ENCODE measurements at regions of chr16 and their contacts with region 1.

Region 1: GRCh38 chr16:85777583-85778298 is 21.6 kb downstream of the EMC8 start:
- DNase-seq: no peak
- H3K4me3 ChIP-seq: no peak overlapping the region
- H3K27ac ChIP-seq: peak overlapping the region; percentile 56
- H3K4me1 ChIP-seq: peaks cover 16% of the 10 kb centered on the region
- H3K27me3 ChIP-seq: no peaks in the 10 kb centered on the region
- CTCF ChIP-seq: no peak
- POLR2A ChIP-seq: no peak

Region 2: GRCh38 chr16:85799497-85800337 is 22.0 kb after region 1 on chr16 and contains the starts of genes COX4I1 and EMC8:
- CTCF ChIA-PET with region 1: no interaction called
- POLR2A ChIA-PET with region 1: no interaction called
- dilution Hi-C with region 1: no loop called
- intact Hi-C with region 1: loop called (anchors 1 kb)
- DNase-seq: peak; percentile 92
- H3K4me3 ChIP-seq: peak within 1 kb of the TSS; percentile 52 to 99 (median 85)
- H3K27ac ChIP-seq: peak within 1 kb of the TSS; percentile 96
- H3K4me1 ChIP-seq: peaks cover 14% of the 10 kb centered on the region
- H3K27me3 ChIP-seq: no peaks in the 10 kb centered on the region
- CTCF ChIP-seq: no peak
- POLR2A ChIP-seq: peak; percentile 79
- total RNA-seq, gene COX4I1: 535 and 560 TPM in 2 replicates
- total RNA-seq, gene EMC8: 51.1 and 51.2 TPM in 2 replicates

Region 3: GRCh38 chr16:85869785-85870558 is 92.2 kb after region 1 on chr16:
- CTCF ChIA-PET with region 1: no interaction called
- POLR2A ChIA-PET with region 1: no interaction called
- dilution Hi-C with region 1: no loop called
- intact Hi-C with region 1: no loop called
- DNase-seq: no peak
- H3K4me3 ChIP-seq: no peak overlapping the region
- H3K27ac ChIP-seq: no peak overlapping the region
- H3K4me1 ChIP-seq: no peaks in the 10 kb centered on the region
- H3K27me3 ChIP-seq: peaks cover 15 to 19% of the 10 kb centered on the region in 2 experiments
- CTCF ChIP-seq: no peak
- POLR2A ChIP-seq: no peak

Region 4: DNA sequence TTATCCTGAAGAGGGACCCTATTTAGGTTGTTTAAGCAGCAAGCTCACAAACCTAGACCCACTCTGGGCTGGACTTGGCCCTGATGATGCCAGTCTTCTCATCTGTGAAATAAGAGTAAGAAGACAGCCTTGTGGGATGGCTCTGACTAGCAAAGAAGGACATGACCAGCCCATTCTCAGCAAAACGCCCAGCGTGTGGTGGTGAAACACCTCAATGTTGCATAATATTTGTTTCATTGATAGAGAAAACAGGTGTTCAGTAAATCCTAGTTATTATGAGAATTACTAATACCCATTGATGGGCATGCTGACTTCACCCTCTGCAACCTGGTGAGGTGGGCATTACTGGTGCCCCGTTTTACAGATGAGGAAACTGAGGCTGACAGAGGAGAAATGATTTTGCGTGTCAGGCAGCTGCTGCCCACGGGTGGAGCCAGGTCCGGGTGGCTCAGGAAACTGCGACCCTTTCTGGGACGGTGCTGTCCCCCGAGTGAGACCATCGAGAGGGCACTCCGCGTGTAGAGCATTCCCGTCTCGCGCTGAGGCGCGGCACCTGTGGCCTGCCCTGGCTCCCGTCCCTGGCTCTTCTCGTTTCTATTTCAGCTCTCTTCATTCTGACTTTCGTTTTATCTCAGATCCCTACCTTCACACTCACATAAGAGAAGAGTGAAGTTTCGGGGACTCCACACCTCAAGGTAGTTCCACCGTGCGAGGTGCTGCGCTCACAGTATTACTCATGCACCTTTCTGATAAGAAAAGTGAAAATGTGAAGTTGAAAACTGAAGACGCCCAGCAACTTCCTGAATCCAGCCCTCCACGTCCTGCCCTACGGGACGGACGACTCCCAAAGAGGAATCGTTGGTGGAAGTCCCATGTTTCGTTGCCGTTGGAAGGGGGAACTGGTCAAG is 169.7 kb after region 1 on chr16:
- CTCF ChIA-PET with region 1: no interaction called
- POLR2A ChIA-PET with region 1: no interaction called
- dilution Hi-C with region 1: no loop called
- intact Hi-C with region 1: no loop called
- DNase-seq: no peak
- H3K4me3 ChIP-seq: no peak overlapping the region
- H3K27ac ChIP-seq: no peak overlapping the region
- H3K4me1 ChIP-seq: no peaks in the 10 kb centered on the region
- H3K27me3 ChIP-seq: peaks cover 0 to 5% of the 10 kb centered on the region in 2 experiments
- CTCF ChIP-seq: no peak
- POLR2A ChIP-seq: no peak

Measured in endothelial cell of umbilical vein (primary cell).